ENCODE measurements at regions of chr16 and their contacts with region 1.

Region 1: GRCh38 chr16:11586856-11587642 is at the start of gene LITAF:
- DNase-seq: peak; percentile 63
- H3K4me3 Mint-ChIP-seq: peak within 1 kb of the TSS; percentile 94
- H3K27ac Mint-ChIP-seq: peak within 1 kb of the TSS; percentile 98
- H3K4me1 Mint-ChIP-seq: peaks cover 32% of the 10 kb centered on the region
- H3K27me3 Mint-ChIP-seq: no peaks in the 10 kb centered on the region
- total RNA-seq, gene LITAF: 171 to 174 TPM

Region 2: GRCh38 chr16:10944249-10945064 is 642.6 kb before region 1 on chr16 and contains the start of gene CLEC16A:
- CTCF ChIA-PET with region 1: no interaction called
- intact Hi-C with region 1: loop called (anchors 10 kb)
- DNase-seq: peak; percentile 97
- H3K4me3 Mint-ChIP-seq: peak within 1 kb of the TSS; percentile 81
- H3K27ac Mint-ChIP-seq: peak within 1 kb of the TSS; percentile 70
- H3K4me1 Mint-ChIP-seq: peaks cover 61% of the 10 kb centered on the region
- H3K27me3 Mint-ChIP-seq: no peaks in the 10 kb centered on the region
- total RNA-seq, gene CLEC16A: 18.4 to 20.1 TPM

Region 3: GRCh38 chr16:11535471-11535870 is 51.6 kb before region 1 on chr16:
- CTCF ChIA-PET with region 1: interaction called, 7 read pairs
- intact Hi-C with region 1: loop called (anchors 2 kb)
- DNase-seq: no peak
- H3K4me3 Mint-ChIP-seq: no peak overlapping the region
- H3K27ac Mint-ChIP-seq: no peak overlapping the region
- H3K4me1 Mint-ChIP-seq: peaks cover 13% of the 10 kb centered on the region
- H3K27me3 Mint-ChIP-seq: no peaks in the 10 kb centered on the region

Region 4: GRCh38 chr16:11615756-11616447 is 28.9 kb after region 1 on chr16:
- CTCF ChIA-PET with region 1: no interaction called
- intact Hi-C with region 1: loop called (anchors 2 kb)
- DNase-seq: no peak
- H3K4me3 Mint-ChIP-seq: no peak overlapping the region
- H3K27ac Mint-ChIP-seq: no peak overlapping the region
- H3K4me1 Mint-ChIP-seq: peaks cover 41% of the 10 kb centered on the region
- H3K27me3 Mint-ChIP-seq: no peaks in the 10 kb centered on the region

Region 5: GRCh38 chr16:11667824-11668622 is 81.0 kb after region 1 on chr16 and contains the start of gene SNN:
- CTCF ChIA-PET with region 1: interaction called, 4 read pairs
- intact Hi-C with region 1: loop called (anchors 1 kb)
- DNase-seq: peak; percentile 89
- H3K4me3 Mint-ChIP-seq: peak within 1 kb of the TSS; percentile 72
- H3K27ac Mint-ChIP-seq: no peak within 1 kb of the TSS
- H3K4me1 Mint-ChIP-seq: peaks cover 71% of the 10 kb centered on the region
- H3K27me3 Mint-ChIP-seq: no peaks in the 10 kb centered on the region
- total RNA-seq, gene SNN: 12.0 to 13.6 TPM

Region 6: DNA sequence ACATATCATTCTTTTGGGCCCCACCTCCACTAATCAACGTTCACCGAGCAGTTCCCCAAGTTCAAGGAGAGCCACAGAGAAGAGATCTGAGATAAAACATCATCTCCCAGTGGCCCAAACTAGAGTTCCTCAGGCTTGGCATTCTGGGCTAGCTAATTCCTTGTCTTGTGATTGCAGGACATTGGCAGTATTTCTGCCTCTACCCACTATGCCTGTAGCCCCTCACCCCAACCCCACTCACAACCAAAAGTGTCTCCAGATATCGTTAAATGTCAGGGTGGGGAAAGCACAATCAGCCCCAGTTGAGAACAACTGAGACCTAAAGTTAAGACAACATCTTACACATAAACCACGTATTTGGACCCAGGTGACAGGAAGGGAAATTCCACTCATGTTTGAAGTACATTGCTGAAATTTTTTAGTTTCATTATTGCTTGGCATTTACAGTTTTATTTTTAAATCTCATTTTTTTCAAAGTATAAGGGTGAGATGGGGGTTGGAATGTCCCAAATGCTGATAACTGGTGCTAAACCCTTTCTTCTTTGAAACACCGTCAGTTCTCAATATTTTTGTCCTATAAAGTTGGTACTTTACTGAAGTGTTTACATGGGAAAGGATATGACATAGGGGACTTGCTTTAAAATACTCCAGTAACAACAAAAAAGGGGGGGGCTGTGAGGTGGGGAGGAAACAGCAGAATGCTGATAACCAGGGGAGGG is 196.4 kb after region 1 on chr16:
- CTCF ChIA-PET with region 1: no interaction called
- intact Hi-C with region 1: loop called (anchors 2 kb)
- DNase-seq: peak; percentile 79
- H3K4me3 Mint-ChIP-seq: peak overlapping the region; percentile 71
- H3K27ac Mint-ChIP-seq: peak overlapping the region; percentile 98
- H3K4me1 Mint-ChIP-seq: peaks cover 72% of the 10 kb centered on the region
- H3K27me3 Mint-ChIP-seq: no peaks in the 10 kb centered on the region

Region 7: DNA sequence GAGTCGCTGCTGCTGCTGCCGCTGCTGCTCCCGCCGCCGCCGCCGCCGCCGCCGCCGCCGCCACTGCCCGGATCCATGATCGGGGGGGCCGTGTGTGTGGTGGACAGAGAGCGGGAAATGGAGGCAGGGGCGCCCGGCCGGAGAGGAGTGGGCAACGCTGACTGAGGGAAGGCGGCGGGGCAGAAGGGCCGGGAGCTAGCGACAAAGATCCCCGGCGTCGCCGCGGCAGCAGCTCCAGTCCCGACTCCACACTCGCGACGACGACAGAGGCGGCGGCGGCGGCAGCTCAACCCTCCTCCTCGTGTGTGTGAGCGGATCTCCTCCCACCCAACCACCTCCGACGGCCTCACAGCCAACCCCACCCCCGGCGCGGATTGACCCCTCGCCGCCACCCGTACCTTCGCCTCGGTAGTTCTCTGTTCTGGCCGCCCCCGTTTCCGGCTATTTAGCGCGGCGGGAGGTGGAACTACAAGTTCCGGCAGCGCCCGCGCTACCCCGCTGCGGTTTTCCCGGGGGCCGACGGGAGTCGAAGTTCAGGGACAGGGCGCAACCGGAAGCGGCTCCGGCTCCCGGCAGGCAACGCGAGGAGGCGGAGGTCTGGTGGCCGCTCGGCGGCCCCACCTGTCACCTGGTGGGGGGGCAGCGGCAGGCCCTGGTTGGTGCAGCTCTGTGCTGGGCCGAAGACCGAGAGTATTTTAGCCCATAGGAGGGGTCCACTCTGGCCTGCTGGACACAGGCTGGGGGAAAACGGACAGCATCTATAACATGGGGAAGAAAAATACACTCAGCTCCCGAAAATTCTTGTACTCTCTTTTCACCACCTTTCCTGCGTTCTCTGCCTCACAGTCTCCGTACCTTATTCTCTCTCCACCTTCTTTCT is 328.8 kb after region 1 on chr16 and contains the start of gene GSPT1:
- CTCF ChIA-PET with region 1: no interaction called
- intact Hi-C with region 1: loop called (anchors 10 kb)
- DNase-seq: peak; percentile 100
- H3K4me3 Mint-ChIP-seq: peak within 1 kb of the TSS; percentile 91
- H3K27ac Mint-ChIP-seq: peak within 1 kb of the TSS; percentile 94
- H3K4me1 Mint-ChIP-seq: peaks cover 32% of the 10 kb centered on the region
- H3K27me3 Mint-ChIP-seq: no peaks in the 10 kb centered on the region
- total RNA-seq, gene GSPT1: 165 to 175 TPM

Measured in activated naive CD4-positive, alpha-beta T cell treated with anti-CD3 and anti-CD28 coated beads for 36 hours (primary cell).